Activated naive CD4-positive, alpha-beta T cell treated with anti-CD3 and anti-CD28 coated beads for 36 hours (primary cell): ENCODE measurements at regions of chr3 and their contacts with region 1.

Region 1: DNA sequence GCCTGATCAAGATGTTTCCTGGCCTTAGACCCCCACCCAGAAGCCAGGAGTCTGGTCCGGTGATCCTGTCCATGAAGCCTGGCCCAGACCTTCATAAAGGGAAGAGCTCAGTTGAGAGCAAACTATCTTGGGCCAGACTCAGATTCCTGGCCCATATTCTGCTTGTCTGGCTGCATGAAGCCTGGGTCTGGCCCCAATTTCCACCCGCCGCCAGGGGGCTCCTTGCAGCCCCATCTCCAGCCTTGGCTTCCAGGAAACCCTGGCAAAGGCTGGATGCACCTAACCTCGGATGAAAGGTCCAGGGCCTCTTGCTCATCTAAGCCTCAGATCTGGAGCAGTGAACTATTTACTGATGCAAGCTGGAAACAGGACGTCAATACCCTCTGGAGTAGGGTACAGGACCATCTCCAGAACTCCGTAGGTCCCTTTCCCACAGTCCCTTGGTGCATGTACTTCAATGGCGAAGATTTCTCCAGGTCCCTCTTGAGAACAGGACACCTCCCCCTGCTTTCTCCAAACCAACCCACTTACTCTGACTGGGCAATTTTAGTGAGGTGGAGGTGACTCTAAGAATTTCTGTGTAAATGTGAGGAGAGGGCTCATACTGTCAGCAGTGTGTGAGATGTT is 5.6 kb downstream of the FOXL2 start:
- DNase-seq: peak; percentile 44
- H3K4me3 Mint-ChIP-seq: no peak overlapping the region
- H3K27ac Mint-ChIP-seq: no peak overlapping the region
- H3K4me1 Mint-ChIP-seq: peaks cover 45% of the 10 kb centered on the region
- H3K27me3 Mint-ChIP-seq: peaks cover 87% of the 10 kb centered on the region

Region 2: GRCh38 chr3:138726946-138727730 is 214.2 kb before region 1 on chr3:
- CTCF ChIA-PET with region 1: no interaction called
- intact Hi-C with region 1: no loop called
- DNase-seq: no peak
- H3K4me3 Mint-ChIP-seq: no peak overlapping the region
- H3K27ac Mint-ChIP-seq: peak overlapping the region; percentile 15
- H3K4me1 Mint-ChIP-seq: peaks cover 34% of the 10 kb centered on the region
- H3K27me3 Mint-ChIP-seq: no peaks in the 10 kb centered on the region

Region 3: GRCh38 chr3:139088462-139089324 is 147.3 kb after region 1 on chr3:
- CTCF ChIA-PET with region 1: no interaction called
- intact Hi-C with region 1: no loop called
- DNase-seq: no peak
- H3K4me3 Mint-ChIP-seq: no peak overlapping the region
- H3K27ac Mint-ChIP-seq: no peak overlapping the region
- H3K4me1 Mint-ChIP-seq: no peaks in the 10 kb centered on the region
- H3K27me3 Mint-ChIP-seq: peaks cover 10% of the 10 kb centered on the region

Region 4: GRCh38 chr3:139202226-139202958 is 261.0 kb after region 1 on chr3:
- CTCF ChIA-PET with region 1: no interaction called
- intact Hi-C with region 1: loop called (anchors 10 kb)
- DNase-seq: peak; percentile 24
- H3K4me3 Mint-ChIP-seq: no peak overlapping the region
- H3K27ac Mint-ChIP-seq: no peak overlapping the region
- H3K4me1 Mint-ChIP-seq: no peaks in the 10 kb centered on the region
- H3K27me3 Mint-ChIP-seq: peaks cover 12% of the 10 kb centered on the region

Region 5: DNA sequence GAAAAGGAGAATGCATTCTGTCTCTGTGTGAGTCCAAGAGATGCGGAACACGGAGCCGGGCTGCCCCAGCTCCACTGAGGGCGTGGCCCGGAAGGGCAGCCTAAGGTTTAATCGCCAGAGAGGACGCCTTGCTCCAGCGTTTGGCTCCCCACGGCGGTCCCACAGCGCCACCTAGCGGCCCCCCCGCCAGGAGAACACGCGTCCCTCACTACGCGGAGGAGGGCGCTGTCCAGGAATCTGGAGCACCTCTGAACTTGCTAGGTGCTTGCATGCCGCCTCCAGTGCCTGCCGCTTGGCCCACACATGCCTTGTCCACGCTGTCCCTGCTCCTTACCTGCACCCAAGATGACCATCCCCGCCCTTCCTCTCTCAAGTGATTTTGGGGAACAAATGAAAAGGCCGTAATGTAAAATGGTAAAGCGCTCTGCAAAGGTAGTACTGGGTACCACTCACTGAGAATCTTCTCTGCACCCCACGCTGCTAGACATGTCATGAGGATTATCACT is 388.0 kb after region 1 on chr3:
- CTCF ChIA-PET with region 1: interaction called, 8 read pairs
- intact Hi-C with region 1: loop called (anchors 1 kb)
- DNase-seq: peak; percentile 93
- H3K4me3 Mint-ChIP-seq: peak overlapping the region; percentile 46
- H3K27ac Mint-ChIP-seq: no peak overlapping the region
- H3K4me1 Mint-ChIP-seq: peaks cover 15% of the 10 kb centered on the region
- H3K27me3 Mint-ChIP-seq: peaks cover 28% of the 10 kb centered on the region